H1 (cell line): ENCODE measurements at regions of chr11 and their contacts with region 1.

Region 1: GRCh38 chr11:117511931-117512539 is 184.4 kb downstream of the CEP164 start:
- DNase-seq: no peak
- H3K4me3 ChIP-seq: no peak overlapping the region
- H3K27ac ChIP-seq: no peak overlapping the region
- H3K4me1 ChIP-seq: peaks cover 7 to 23% (median 14%) of the 10 kb centered on the region in 4 experiments
- H3K27me3 ChIP-seq: no peaks in the 10 kb centered on the region
- CTCF ChIP-seq: no peak
- EP300 ChIP-seq: no peak
- POLR2A ChIP-seq: no peak
- RAD21 ChIP-seq: no peak

Region 2: GRCh38 chr11:117610045-117610444 is 98.0 kb after region 1 on chr11:
- CTCF ChIA-PET with region 1: interaction called, 16 read pairs
- POLR2A ChIA-PET with region 1: no interaction called
- DNase-seq: no peak
- H3K4me3 ChIP-seq: no peak overlapping the region
- H3K27ac ChIP-seq: no peak overlapping the region
- H3K4me1 ChIP-seq: peaks cover 0 to 34% (median 19%) of the 10 kb centered on the region in 4 experiments; a peak in 5 of 7 replicates
- H3K27me3 ChIP-seq: peaks cover 0 to 4% (median 1%) of the 10 kb centered on the region in 4 experiments; a peak in 3 of 7 replicates
- CTCF ChIP-seq: no peak
- EP300 ChIP-seq: no peak
- POLR2A ChIP-seq: no peak
- RAD21 ChIP-seq: no peak